Sciatic nerve (tissue), 2 donors: ENCODE measurements at regions of chr2 and their contacts with region 1.

Region 1: DNA sequence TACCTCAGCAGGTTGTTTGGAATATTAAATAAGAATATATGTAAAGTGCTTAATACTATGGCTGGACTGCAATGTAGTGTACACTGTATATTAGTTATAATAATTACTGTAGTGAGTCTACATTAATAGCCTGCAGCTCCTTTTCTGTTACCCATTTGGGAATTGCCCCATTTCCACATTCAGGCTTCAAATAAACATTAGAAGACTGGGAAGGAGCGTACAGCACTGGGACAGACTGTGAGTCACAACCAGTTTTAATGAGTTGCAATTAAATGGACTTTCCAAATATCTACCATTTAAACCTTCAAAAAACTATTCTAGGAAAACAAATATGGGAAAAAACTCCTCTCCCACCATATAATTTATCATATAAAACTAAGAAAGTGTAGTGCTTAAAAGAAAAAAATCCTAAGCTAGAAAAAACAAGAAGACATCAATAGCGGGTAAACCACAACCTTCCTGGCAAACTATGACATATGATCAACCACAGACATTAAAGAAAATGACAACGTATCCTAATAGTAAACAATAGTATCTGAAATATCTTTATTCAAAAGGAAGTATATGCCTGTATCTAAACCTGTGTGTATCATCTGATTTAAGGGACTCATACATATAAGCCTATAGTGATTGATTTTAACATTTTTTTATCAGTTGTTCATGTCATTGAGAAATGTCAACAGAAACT is 86.1 kb downstream of the TRIP12 start:
- DNase-seq: no peak
- ATAC-seq: no peak

Region 2: DNA sequence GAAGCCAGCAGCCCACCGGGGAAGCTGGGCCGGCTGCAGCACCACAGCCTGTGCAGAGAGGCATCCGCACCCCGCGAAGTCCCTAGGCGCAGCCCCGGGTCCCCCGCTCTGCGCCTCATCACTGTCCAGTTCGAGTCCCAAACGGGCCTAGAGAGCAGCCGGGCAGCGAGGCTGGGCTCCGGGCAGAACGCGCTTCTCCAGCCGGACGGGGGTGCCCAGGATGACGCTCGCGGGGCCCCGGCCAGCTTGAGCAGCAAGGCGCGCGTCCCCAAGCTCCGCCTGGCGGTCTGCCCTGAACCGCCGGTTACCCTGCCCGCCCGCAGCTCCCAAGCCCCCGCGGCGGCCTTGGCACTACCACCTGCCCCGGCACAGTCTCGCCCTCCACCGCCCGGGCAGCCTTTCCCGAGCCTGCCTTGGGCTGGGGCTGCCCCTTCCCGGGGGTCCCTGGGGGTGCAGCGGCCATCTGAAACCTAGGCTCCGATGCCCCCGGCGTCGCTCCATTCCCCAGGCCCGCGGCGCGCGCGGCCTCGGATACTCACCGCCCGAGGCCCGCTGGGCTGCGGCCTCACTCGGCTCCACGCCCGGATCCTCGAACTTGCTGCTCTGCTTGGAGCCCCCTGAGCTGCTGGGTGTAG is 232.4 kb after region 1 on chr2:
- intact Hi-C with region 1: loop called (anchors 10 kb)
- DNase-seq: peak; percentile 73
- ATAC-seq: peak; percentile 51